Activated naive CD8-positive, alpha-beta T cell treated with anti-CD3 and anti-CD28 coated beads, Interleukin-2, amount 10 ng/mL, durations not matched to agents 7 days and 5 days (primary cell): ENCODE measurements at regions of chr1 and their contacts with region 1.

Region 1: GRCh38 chr1:111448918-111449702 is at the starts of genes ATP5PB and WDR77:
- DNase-seq: peak; percentile 83
- ATAC-seq: peak; percentile 94
- H3K4me3 Mint-ChIP-seq: peak within 1 kb of the TSS; percentile 99
- H3K27ac Mint-ChIP-seq: peak within 1 kb of the TSS; percentile 94
- H3K4me1 Mint-ChIP-seq: peaks cover 61% of the 10 kb centered on the region
- H3K27me3 Mint-ChIP-seq: no peaks in the 10 kb centered on the region
- total RNA-seq, gene ATP5PB: 259 to 260 TPM
- total RNA-seq, gene WDR77: 35.7 to 35.9 TPM

Region 2: DNA sequence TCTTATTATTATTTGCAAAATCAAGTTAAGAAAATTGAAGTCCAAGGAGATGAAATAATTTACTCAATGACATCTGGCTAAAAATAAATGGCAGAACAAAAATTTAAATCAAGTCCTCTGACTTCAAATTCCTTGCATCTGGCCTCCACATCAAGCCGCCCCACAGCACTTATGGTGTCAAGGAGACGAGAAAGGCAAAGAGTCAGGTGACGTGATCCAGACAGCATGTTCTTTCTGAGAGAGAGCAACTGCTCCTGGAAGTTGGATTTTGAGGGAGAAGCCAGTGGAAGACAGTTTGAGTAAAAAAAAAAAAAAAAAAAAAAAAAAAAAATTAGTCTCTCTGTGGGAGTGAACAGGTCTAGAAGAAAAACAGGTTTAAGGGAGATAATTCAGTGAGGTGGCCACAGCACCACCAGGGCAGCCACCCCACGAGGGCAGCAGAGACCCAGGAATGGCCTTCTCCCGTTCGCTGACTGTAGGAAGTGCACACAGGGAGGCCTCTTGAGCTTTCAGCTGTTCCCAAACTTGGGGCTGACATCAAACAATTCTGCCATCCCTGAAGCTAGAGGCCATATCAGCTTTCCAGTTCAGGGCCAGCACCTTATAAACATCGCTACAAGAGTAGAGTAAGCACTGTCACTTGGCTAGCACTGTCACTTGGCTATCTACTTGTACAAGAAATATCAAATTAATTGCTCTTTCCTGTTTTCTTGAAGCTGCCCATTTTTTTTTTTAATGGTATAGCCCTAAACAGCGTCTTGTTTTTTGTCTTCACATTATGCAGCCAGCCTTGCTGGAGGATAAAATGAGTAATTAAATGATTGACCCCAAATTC is 32.5 kb after region 1 on chr1:
- POLR2A ChIA-PET with region 1: interaction called, 80 read pairs
- DNase-seq: peak; percentile 71
- ATAC-seq: peak; percentile 64
- H3K4me3 Mint-ChIP-seq: no peak overlapping the region
- H3K27ac Mint-ChIP-seq: no peak overlapping the region
- H3K4me1 Mint-ChIP-seq: peaks cover 34% of the 10 kb centered on the region
- H3K27me3 Mint-ChIP-seq: peaks cover 5% of the 10 kb centered on the region

Region 3: DNA sequence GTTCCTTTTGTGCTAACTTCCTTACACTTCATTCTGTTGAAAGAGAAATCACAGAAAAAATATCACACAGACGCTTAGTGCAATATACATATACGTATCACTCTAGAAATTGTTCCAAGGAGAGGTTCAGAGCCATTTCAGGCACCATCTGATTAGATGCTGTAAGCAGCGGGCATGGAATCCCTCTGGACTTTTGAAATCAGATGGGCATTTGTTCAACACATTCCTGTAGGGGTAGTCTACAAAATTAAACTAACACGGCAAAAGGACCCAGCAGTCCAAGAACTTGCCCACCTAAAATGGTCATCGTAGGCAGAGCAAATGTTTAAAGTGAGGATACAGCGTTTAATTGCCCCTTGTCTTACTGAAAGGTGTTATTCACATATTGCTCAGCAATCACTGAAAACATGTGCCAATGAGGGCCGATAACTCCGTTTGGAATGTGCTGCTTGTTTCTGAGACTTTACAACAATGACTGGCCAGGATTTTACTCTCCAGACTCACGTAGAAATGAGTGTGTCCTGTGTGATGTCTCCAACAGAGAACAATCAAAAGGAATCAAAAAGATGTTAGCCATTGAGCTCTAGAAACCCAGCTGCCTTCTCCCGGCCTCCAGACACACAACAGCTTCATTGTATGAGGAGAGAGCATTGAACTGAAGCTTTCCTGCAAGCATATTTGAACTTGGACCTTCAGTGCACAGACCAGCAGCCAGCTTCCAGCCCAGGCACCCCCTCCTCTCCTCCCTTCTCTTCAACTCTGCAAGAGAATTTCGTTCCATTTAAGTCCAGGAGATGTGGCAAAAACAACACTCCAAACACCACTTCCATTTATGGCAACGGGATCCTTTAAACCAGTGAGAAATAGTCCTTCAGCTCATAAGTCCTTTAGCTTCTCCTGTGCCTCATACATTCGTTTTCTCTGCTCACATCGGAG is 86.4 kb after region 1 on chr1:
- POLR2A ChIA-PET with region 1: no interaction called
- DNase-seq: no peak
- ATAC-seq: no peak
- H3K4me3 Mint-ChIP-seq: no peak overlapping the region
- H3K27ac Mint-ChIP-seq: no peak overlapping the region
- H3K4me1 Mint-ChIP-seq: peaks cover 5% of the 10 kb centered on the region
- H3K27me3 Mint-ChIP-seq: peaks cover 2% of the 10 kb centered on the region